ENCODE measurements at regions of chr18 and their contacts with region 1.

Region 1: DNA sequence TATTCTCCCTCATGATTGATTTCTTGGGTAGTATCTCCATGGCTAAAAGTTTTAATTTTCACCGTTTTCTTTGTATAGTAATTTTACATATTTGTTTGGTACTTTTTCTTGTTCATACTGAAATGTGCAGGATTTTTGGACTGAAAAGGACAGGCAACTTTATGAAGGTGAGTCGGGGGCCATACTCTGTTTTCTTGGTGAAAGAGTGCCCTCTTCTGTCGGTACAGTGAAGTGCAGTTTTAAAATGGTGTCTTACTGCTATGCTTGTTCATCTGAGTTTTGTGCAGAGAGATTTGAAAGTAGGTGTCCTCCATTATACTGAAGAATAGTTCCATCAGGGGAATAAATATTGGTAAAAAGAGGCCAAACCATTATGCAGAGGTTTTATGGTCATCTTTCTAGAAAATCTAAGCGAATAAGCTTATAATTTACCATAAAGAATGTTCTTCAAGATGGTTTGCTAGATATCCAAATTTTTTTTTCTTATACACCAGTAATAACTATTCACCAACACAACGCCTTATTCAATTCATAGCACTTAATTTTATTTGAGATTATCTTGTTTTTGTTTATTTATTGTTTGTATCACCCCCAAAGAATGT is 8.7 kb upstream of the SERPINB13 start:
- DNase-seq: no peak
- H3K4me3 ChIP-seq: no peak overlapping the region
- CTCF ChIP-seq: peak; percentile 73

Region 2: DNA sequence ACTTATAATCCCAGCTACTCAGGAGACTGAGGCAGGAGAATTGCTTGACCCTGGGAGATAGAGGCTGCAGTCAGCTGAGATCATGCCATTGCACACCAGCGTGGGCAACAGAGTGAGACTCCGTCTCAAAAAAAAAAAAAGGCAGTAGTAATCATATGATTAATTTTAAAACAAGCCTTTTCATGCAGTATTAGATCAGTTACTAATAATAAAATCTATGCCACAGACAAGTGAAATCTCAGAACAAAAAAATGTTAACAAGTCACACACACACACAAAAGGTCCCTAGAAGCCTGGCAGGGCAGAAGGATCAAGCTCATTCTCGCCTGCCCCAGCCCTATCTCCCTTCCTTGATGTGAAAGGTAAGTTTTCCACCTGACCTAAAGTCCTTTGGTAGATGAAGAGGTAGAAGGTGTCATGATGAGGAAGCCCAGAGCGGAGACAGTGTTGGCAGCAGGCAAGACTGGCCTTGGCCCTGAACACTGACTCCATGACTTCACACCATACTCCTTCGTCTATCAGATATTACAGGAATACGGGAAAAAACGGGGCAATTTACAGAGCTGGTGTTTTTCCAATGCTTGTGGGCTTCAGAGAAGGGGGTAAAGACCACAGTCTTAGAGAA is 222.1 kb before region 1 on chr18:
- CTCF ChIA-PET with region 1: no interaction called
- POLR2A ChIA-PET with region 1: no interaction called
- DNase-seq: no peak
- H3K4me3 ChIP-seq: no peak overlapping the region
- CTCF ChIP-seq: no peak

Region 3: GRCh38 chr18:63523660-63524059 is 54.8 kb before region 1 on chr18:
- CTCF ChIA-PET with region 1: interaction called, 724 read pairs
- POLR2A ChIA-PET with region 1: no interaction called
- DNase-seq: no peak
- H3K4me3 ChIP-seq: no peak overlapping the region
- CTCF ChIP-seq: peak; percentile 25

Region 4: DNA sequence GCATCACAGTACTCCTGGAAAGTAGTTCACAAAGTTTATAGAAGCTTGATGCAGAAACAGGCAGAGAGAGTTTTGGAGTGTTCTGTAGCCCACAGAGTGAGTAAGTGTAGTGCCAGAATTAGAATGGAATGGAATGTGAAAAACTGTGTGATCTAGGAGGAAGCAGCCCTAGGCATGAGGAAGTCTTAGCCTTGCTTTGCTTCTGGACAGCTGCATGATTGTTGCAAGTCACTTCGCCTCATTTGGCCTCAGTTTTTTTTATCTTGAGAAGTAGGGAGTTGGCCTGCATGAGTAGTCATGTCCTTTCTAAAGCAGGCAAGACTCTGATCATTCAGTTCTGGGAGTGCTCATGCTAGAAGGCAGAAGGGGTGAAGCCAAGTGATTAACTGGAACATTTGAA is 25.3 kb before region 1 on chr18:
- CTCF ChIA-PET with region 1: interaction called, 23 read pairs
- POLR2A ChIA-PET with region 1: no interaction called
- DNase-seq: peak; percentile 95
- H3K4me3 ChIP-seq: no peak overlapping the region
- CTCF ChIP-seq: no peak

Region 5: DNA sequence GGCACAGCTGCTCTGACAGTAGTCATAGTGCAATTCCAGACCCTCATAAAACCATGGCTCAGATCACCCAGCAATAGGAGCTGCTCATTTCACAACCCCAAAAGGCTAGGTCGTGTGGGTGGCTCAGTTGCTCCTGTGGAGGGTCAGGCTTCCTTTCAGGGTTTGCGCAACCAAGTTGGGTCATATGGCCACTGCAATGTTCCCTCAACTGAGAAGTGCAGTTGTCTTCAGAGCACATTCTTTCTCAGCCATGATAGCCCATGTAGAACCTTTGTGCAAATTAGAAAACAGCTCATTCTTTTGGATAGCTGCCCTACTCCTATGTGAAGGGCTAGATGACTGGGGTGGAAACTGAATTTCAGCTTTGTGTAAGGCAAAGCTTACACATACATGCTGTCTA is 11.9 kb after region 1 on chr18:
- CTCF ChIA-PET with region 1: interaction called, 69 read pairs
- POLR2A ChIA-PET with region 1: no interaction called
- DNase-seq: no peak
- H3K4me3 ChIP-seq: no peak overlapping the region
- CTCF ChIP-seq: no peak

Region 6: GRCh38 chr18:63775166-63775730 is 196.8 kb after region 1 on chr18 and contains the start of gene SERPINB7:
- CTCF ChIA-PET with region 1: interaction called, 12 read pairs
- POLR2A ChIA-PET with region 1: no interaction called
- DNase-seq: peak; percentile 63
- H3K4me3 ChIP-seq: no peak within 1 kb of the TSS
- CTCF ChIP-seq: no peak

Region 7: GRCh38 chr18:63890950-63891304 is 312.5 kb after region 1 on chr18:
- CTCF ChIA-PET with region 1: no interaction called
- POLR2A ChIA-PET with region 1: no interaction called
- DNase-seq: no peak
- H3K4me3 ChIP-seq: no peak overlapping the region
- CTCF ChIP-seq: no peak